ENCODE measurements at regions of chr1 and their contacts with region 1.

Region 1: GRCh38 chr1:54973205-54973921 is 7.1 kb upstream of the TMEM61 start:
- DNase-seq: peak; percentile 24 to 44
- ATAC-seq: peak; percentile 83 to 89; a peak in 5 of 6 replicates
- H3K4me3 ChIP-seq: no peak overlapping the region
- H3K27ac ChIP-seq: no peak overlapping the region
- H3K4me1 ChIP-seq: peaks cover 22% of the 10 kb centered on the region
- CTCF ChIP-seq: peak; percentile 37
- EP300 ChIP-seq: no peak
- POLR2A ChIP-seq: no peak
- RAD21 ChIP-seq: peak; percentile 19 to 27; a peak in 1 of 5 replicates

Region 2: GRCh38 chr1:54987919-54988705 is 14.7 kb after region 1 on chr1:
- CTCF ChIA-PET with region 1: interaction called, 14 read pairs
- POLR2A ChIA-PET with region 1: no interaction called
- DNase-seq: no peak
- ATAC-seq: no peak
- H3K4me3 ChIP-seq: no peak overlapping the region
- H3K27ac ChIP-seq: no peak overlapping the region; a peak in 1 of 6 replicates
- H3K4me1 ChIP-seq: no peaks in the 10 kb centered on the region
- CTCF ChIP-seq: no peak
- EP300 ChIP-seq: no peak
- POLR2A ChIP-seq: no peak
- RAD21 ChIP-seq: no peak

Measured in A549 (cell line).